ENCODE measurements at regions of chr13 and their contacts with region 1.

Region 1: GRCh38 chr13:24671386-24672107 is 8.7 kb upstream of the ATP12A start:
- DNase-seq: peak in 1 of 2 donors; percentile 61
- ATAC-seq: peak in 2 of 3 donors; percentile 50 to 55
- H3K4me3 ChIP-seq: no peak overlapping the region
- H3K4me3 Mint-ChIP-seq: peak overlapping the region; percentile 4
- H3K27ac ChIP-seq: no peak overlapping the region
- H3K27ac Mint-ChIP-seq: no peak overlapping the region
- H3K4me1 ChIP-seq: peaks cover 16% of the 10 kb centered on the region
- H3K4me1 Mint-ChIP-seq: peaks cover 10 to 15% of the 10 kb centered on the region in 2 donors
- H3K27me3 ChIP-seq: no peaks in the 10 kb centered on the region
- H3K27me3 Mint-ChIP-seq: peaks cover 6 to 21% of the 10 kb centered on the region in 2 donors
- CTCF ChIP-seq: peak; percentile 74

Region 2: GRCh38 chr13:24574847-24575246 is 96.7 kb before region 1 on chr13:
- intact Hi-C with region 1: loop called (anchors 2 kb)
- DNase-seq: no peak
- ATAC-seq: no peak
- H3K4me3 ChIP-seq: no peak overlapping the region
- H3K4me3 Mint-ChIP-seq: no peak overlapping the region
- H3K27ac ChIP-seq: no peak overlapping the region
- H3K27ac Mint-ChIP-seq: no peak overlapping the region
- H3K4me1 ChIP-seq: no peaks in the 10 kb centered on the region
- H3K4me1 Mint-ChIP-seq: peaks cover 4 to 5% of the 10 kb centered on the region in 2 donors
- H3K27me3 ChIP-seq: no peaks in the 10 kb centered on the region
- H3K27me3 Mint-ChIP-seq: peaks cover 2 to 7% of the 10 kb centered on the region in 2 donors
- CTCF ChIP-seq: no peak

Region 3: DNA sequence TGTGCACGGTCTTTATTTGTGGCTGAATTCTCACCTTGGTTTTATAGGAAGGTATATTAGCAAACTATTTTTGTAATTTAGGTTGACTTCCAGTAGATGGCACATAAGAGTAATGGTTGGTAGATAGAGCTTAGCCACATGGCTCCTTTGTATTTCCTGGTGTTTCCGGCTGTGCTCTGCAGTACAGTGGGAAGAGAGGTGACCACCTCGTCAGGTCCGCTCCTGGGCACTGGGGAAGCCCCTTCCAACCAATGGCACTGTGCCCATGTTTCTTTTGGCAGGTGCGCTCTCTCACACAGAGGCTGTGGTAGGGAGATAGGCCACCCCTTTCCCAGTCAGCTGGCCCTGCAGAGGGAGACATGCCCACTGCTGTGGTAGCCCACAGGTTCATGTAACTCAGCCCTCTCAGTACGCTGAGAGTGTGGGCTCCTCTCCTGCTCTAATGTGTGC is 65.6 kb before region 1 on chr13:
- intact Hi-C with region 1: loop called (anchors 1 kb)
- DNase-seq: no peak
- ATAC-seq: peak in 1 of 3 donors; percentile 87
- H3K4me3 ChIP-seq: no peak overlapping the region
- H3K4me3 Mint-ChIP-seq: no peak overlapping the region
- H3K27ac ChIP-seq: no peak overlapping the region
- H3K27ac Mint-ChIP-seq: peak overlapping the region in 1 of 2 donors; percentile 66
- H3K4me1 ChIP-seq: no peaks in the 10 kb centered on the region
- H3K4me1 Mint-ChIP-seq: peaks cover 3 to 16% of the 10 kb centered on the region in 2 donors
- H3K27me3 ChIP-seq: no peaks in the 10 kb centered on the region
- H3K27me3 Mint-ChIP-seq: peaks cover 0 to 7% of the 10 kb centered on the region in 2 donors
- CTCF ChIP-seq: peak; percentile 37

Measured in natural killer cell (primary cell).